Caco-2 (cell line): ENCODE measurements at regions of chr6 and their contacts with region 1.

Region 1: DNA sequence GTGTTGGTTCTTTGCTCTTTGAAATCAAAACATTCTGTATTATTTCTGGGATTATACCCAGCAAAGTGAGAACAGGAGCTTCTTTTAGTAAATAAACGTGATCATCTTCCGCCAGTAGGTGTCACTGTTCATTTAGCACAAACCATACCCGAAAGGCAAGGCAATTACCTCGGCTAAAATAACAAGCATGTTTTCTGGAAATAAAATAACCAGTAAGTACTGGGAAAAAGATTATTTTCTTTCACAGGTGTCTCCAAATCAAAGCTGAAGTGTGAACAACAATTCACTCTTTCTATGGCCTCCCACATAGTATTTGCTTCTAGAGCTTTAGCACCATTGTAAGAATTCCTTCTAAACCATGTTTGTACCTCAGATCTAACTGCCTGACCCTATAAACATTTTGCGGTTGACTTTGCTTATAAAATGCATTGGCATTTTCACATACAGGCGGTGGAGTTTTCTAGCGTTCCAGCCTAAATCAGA is 144.6 kb upstream of the AGPAT4 start:
- DNase-seq: peak in 1 of 2 experiments; percentile 60
- H3K4me3 ChIP-seq: no peak overlapping the region
- H3K4me3 Mint-ChIP-seq: no peak overlapping the region
- H3K27ac Mint-ChIP-seq: no peak overlapping the region
- H3K4me1 ChIP-seq: no peaks in the 10 kb centered on the region
- H3K4me1 Mint-ChIP-seq: no peaks in the 10 kb centered on the region
- H3K27me3 ChIP-seq: no peaks in the 10 kb centered on the region
- H3K27me3 Mint-ChIP-seq: no peaks in the 10 kb centered on the region
- CTCF ChIP-seq: peak; percentile 61 to 64

Region 2: GRCh38 chr6:161265971-161266370 is 152.5 kb before region 1 on chr6:
- CTCF ChIA-PET with region 1: no interaction called
- POLR2A ChIA-PET with region 1: no interaction called
- intact Hi-C with region 1: no loop called
- DNase-seq: no peak
- H3K4me3 ChIP-seq: no peak overlapping the region
- H3K4me3 Mint-ChIP-seq: no peak overlapping the region
- H3K27ac Mint-ChIP-seq: no peak overlapping the region
- H3K4me1 ChIP-seq: no peaks in the 10 kb centered on the region
- H3K4me1 Mint-ChIP-seq: peaks cover under 1% of the 10 kb centered on the region
- H3K27me3 ChIP-seq: no peaks in the 10 kb centered on the region
- H3K27me3 Mint-ChIP-seq: no peaks in the 10 kb centered on the region
- CTCF ChIP-seq: no peak

Region 3: GRCh38 chr6:161393839-161394364 is 24.6 kb before region 1 on chr6:
- CTCF ChIA-PET with region 1: interaction called, 7 read pairs
- POLR2A ChIA-PET with region 1: no interaction called
- intact Hi-C with region 1: loop called (anchors 1 kb)
- DNase-seq: peak in 1 of 2 experiments; percentile 55
- H3K4me3 ChIP-seq: no peak overlapping the region
- H3K4me3 Mint-ChIP-seq: no peak overlapping the region
- H3K27ac Mint-ChIP-seq: no peak overlapping the region
- H3K4me1 ChIP-seq: no peaks in the 10 kb centered on the region
- H3K4me1 Mint-ChIP-seq: no peaks in the 10 kb centered on the region
- H3K27me3 ChIP-seq: no peaks in the 10 kb centered on the region
- H3K27me3 Mint-ChIP-seq: peaks cover 8% of the 10 kb centered on the region
- CTCF ChIP-seq: peak; percentile 50 to 67

Region 4: DNA sequence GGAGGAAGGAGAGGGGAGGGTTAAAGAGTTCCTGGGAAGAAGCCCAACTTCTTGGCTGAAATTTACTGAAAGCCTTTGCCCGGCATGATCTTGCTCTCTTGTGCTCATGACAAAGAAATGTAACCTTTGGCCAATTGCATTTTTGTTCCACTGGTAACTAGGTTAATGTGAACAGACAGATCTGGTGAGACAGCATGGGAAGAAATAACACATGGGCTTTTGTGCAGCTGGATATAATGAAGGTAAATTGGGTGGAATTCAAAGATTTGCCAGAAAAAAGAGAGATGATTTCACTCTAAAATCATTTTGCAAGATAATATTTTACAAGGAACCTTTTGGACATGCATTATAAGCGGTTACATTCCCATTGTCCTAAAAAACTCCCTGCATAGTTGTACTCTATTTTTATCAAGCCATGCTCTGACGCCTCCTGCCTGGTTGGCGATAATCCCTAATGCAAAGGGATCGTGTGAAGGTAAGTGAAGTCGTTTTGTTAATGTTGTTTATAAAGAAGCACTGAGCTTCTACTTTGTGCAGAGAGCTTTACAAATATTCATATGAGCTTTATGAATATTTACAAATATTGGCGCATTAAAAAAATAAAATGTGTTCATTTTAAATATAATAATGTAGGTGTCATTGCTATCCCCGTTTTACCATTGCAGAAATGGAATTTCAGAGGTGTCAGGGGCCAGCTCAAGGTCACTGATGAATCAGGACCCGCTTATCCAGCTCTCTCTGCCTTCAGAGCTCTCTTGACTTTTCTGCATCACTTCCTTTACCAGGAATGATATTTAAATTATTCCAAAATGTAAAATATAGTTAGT is 16.6 kb after region 1 on chr6:
- CTCF ChIA-PET with region 1: interaction called, 3 read pairs
- POLR2A ChIA-PET with region 1: no interaction called
- intact Hi-C with region 1: loop called (anchors 2 kb)
- DNase-seq: peak; percentile 54 to 70
- H3K4me3 ChIP-seq: no peak overlapping the region
- H3K4me3 Mint-ChIP-seq: peak overlapping the region; percentile 71
- H3K27ac Mint-ChIP-seq: peak overlapping the region; percentile 92
- H3K4me1 ChIP-seq: peaks cover 17% of the 10 kb centered on the region
- H3K4me1 Mint-ChIP-seq: peaks cover 11% of the 10 kb centered on the region
- H3K27me3 ChIP-seq: no peaks in the 10 kb centered on the region
- H3K27me3 Mint-ChIP-seq: no peaks in the 10 kb centered on the region
- CTCF ChIP-seq: no peak

Region 5: DNA sequence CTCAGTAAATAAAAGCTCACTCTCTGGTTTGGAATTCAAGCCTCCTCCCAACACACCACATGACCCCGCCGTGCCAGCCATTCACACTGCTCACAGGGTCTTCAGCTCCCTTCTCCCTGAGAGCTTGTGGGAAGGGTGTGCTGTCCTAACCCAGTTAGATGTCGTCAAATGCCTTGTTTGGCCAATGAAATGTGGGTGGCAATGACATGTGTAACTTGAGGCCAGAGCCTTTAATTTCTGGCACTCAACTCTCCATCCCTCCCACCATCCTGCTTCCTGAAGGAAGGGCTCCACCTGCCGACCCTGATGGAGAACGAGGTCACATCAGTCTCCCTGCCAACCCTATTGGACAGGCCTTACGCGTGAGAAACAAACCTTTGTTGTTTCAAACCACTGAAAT is 79.9 kb after region 1 on chr6:
- CTCF ChIA-PET with region 1: interaction called, 19 read pairs
- POLR2A ChIA-PET with region 1: no interaction called
- intact Hi-C with region 1: loop called (anchors 1 kb)
- DNase-seq: peak; percentile 61 to 64
- H3K4me3 ChIP-seq: no peak overlapping the region
- H3K4me3 Mint-ChIP-seq: no peak overlapping the region
- H3K27ac Mint-ChIP-seq: no peak overlapping the region
- H3K4me1 ChIP-seq: no peaks in the 10 kb centered on the region
- H3K4me1 Mint-ChIP-seq: no peaks in the 10 kb centered on the region
- H3K27me3 ChIP-seq: no peaks in the 10 kb centered on the region
- H3K27me3 Mint-ChIP-seq: peaks cover 18% of the 10 kb centered on the region
- CTCF ChIP-seq: peak; percentile 72 to 73

Region 6: DNA sequence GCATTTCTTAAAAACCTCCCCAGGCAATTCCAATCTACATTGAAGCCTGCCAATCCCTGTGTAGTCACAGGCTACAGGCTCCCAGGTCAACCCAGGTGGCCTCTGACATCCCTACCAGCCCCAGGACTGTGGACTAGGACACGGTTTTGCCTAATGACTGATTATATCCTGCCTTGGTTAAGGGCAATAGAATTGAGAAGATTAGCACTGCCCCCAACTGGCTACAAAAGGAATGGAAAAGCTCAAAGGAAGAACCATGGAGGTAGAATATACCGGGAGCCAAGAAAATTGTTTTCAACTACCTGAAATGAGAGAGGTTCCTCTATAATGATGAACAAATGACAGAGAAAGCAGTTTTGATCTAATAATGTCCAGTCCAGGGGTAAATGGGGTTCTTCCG is 276.5 kb after region 1 on chr6:
- CTCF ChIA-PET with region 1: interaction called, 9 read pairs
- POLR2A ChIA-PET with region 1: no interaction called
- intact Hi-C with region 1: loop called (anchors 1 kb)
- DNase-seq: no peak
- H3K4me3 ChIP-seq: no peak overlapping the region
- H3K4me3 Mint-ChIP-seq: no peak overlapping the region
- H3K27ac Mint-ChIP-seq: no peak overlapping the region
- H3K4me1 ChIP-seq: no peaks in the 10 kb centered on the region
- H3K4me1 Mint-ChIP-seq: no peaks in the 10 kb centered on the region
- H3K27me3 ChIP-seq: no peaks in the 10 kb centered on the region
- H3K27me3 Mint-ChIP-seq: peaks cover 6% of the 10 kb centered on the region
- CTCF ChIP-seq: peak in 1 of 2 experiments; percentile 38

Region 7: DNA sequence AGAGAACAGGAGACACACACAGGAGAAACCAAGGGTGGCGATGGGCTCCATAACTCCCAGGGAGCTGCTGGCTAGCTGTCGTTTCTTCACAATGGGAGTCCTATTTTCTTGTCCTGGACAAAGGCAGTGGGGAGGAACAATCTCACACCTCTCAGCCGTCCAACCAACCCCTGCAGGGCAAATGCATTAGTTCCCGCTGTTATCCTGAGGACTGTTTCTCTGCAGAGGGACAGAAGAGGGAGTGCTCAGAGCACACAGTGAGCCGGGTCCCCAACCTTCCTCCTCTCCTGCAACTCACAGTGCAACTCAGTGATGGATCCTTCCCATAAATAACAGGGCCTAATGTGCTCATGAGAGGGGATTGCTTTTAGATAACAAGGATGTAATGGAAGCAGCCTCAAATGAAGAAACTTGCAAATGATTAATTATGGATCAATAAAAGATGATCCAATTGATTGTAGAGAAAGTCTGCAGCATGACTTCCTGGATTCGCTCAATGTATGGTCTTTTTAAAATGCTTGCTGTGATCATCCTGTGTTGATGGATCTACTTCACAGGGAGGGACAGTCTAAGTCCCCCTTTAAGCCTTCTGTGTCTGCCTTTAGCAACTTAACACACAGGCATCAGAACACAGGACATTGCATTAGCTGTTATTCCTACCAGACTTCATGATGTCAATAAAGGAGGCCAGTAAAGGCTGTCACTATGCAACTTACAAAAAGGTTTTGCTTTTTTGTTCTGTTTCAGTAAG is 308.8 kb after region 1 on chr6:
- CTCF ChIA-PET with region 1: no interaction called
- POLR2A ChIA-PET with region 1: no interaction called
- intact Hi-C with region 1: no loop called
- DNase-seq: no peak
- H3K4me3 ChIP-seq: no peak overlapping the region
- H3K4me3 Mint-ChIP-seq: no peak overlapping the region
- H3K27ac Mint-ChIP-seq: no peak overlapping the region
- H3K4me1 ChIP-seq: no peaks in the 10 kb centered on the region
- H3K4me1 Mint-ChIP-seq: no peaks in the 10 kb centered on the region
- H3K27me3 ChIP-seq: no peaks in the 10 kb centered on the region
- H3K27me3 Mint-ChIP-seq: no peaks in the 10 kb centered on the region
- CTCF ChIP-seq: no peak